Ascending aorta (tissue), 2 donors: ENCODE measurements at regions of chr9 and their contacts with region 1.

Region 1: DNA sequence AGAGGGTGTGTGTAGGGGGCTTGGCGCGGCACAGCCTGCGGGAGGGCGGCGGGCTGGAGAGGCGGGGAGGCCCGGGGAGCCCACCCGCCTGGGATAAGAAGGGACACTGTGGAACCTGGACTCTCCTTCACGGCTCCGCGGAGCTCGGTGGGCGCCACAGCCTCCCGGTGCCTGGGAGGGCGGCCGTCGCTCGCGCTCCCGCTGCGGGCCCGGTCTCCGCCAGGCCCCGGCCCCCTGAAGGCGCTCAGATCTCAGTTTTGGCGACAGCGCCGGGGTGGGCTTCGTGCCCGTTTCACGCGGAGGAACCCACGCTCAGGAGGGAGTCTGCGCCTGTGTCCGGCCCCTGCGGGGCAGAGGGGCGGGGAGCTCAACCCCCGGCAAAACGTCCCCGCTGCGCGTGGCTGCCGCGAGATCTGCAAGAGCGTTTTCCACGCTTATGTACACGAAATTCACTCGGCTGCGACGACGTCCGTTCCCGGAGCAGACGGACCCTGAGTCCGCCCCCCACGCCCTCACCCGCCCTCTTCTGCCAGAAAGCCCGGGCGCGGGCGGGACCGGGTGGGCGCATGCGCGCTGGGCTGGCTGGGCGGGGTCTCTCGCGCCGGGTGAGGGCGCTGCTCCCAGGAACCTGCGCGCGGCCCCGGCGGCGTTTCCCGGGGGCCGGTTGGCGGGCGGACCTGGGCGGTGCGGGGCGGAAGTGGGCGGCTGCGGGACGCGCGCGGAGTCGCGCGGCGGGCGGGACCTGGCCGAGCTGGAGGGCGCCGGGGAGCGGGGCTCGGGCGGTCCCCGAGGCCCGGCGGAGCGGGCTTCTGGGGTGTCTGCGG is at the start of gene NELFB:
- DNase-seq: peak; percentile 42 to 95
- H3K4me3 ChIP-seq: peak within 1 kb of the TSS; percentile 88 to 98
- H3K27ac ChIP-seq: peak within 1 kb of the TSS; percentile 50 to 72
- H3K4me1 ChIP-seq: peaks cover 10 to 20% of the 10 kb centered on the region in 2 donors
- H3K27me3 ChIP-seq: no peaks in the 10 kb centered on the region
- CTCF ChIP-seq: peak in 1 of 3 experiments; percentile 28
- total RNA-seq, gene NELFB: 71.7 TPM

Region 2: GRCh38 chr9:137240861-137241489 is 13.9 kb before region 1 on chr9 and contains the start of gene TUBB4B:
- intact Hi-C with region 1: loop called (anchors 1 kb)
- DNase-seq: peak; percentile 99 to 100
- H3K4me3 ChIP-seq: peak within 1 kb of the TSS; percentile 81 to 93
- H3K27ac ChIP-seq: peak within 1 kb of the TSS; percentile 88 to 90
- H3K4me1 ChIP-seq: peaks cover 13 to 28% of the 10 kb centered on the region in 2 donors
- H3K27me3 ChIP-seq: no peaks in the 10 kb centered on the region
- CTCF ChIP-seq: peak in 1 of 3 experiments; percentile 33
- total RNA-seq, gene TUBB4B: 403 TPM

Region 3: GRCh38 chr9:137277329-137278041 is 22.6 kb after region 1 on chr9 and contains the start of gene TOR4A:
- intact Hi-C with region 1: loop called (anchors 2 kb)
- DNase-seq: peak; percentile 63 to 91
- H3K4me3 ChIP-seq: peak within 1 kb of the TSS; percentile 55 to 63
- H3K27ac ChIP-seq: peak within 1 kb of the TSS; percentile 79 to 81
- H3K4me1 ChIP-seq: peaks cover 4 to 12% of the 10 kb centered on the region in 2 donors
- H3K27me3 ChIP-seq: no peaks in the 10 kb centered on the region
- CTCF ChIP-seq: peak in 1 of 3 experiments; percentile 17
- total RNA-seq, gene TOR4A: 38.3 TPM